OCI-LY7 (cell line): ENCODE measurements at regions of chr2 and their contacts with region 1.

Region 1: GRCh38 chr2:4164236-4164635 is 460.9 kb downstream of the DCDC2C start:
- DNase-seq: no peak
- H3K4me3 ChIP-seq: no peak overlapping the region
- H3K27ac ChIP-seq: no peak overlapping the region
- H3K4me1 ChIP-seq: no peaks in the 10 kb centered on the region
- CTCF ChIP-seq: no peak

Region 2: DNA sequence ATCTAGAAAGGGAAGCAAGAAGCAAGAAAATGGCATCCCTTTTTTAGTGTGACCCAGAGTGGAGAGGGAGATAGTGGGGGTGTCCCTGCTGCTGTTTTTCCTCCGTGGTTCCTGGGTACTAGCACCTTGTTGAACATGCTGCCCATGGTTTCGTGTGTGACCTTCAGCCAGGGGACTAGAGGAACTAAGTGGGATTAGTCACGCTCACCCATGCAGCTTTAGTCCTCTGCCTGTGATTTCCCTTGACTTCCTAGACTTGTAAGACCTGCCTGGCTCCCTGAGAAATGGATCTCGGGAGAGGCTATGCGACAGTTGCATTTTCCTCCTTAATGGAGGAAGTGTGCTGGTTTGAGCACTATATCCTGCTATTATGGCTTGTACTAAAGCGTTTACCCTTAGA is 10.6 kb after region 1 on chr2:
- CTCF ChIA-PET with region 1: no interaction called
- POLR2A ChIA-PET with region 1: no interaction called
- intact Hi-C with region 1: loop called (anchors 1 kb)
- DNase-seq: no peak
- H3K4me3 ChIP-seq: no peak overlapping the region
- H3K27ac ChIP-seq: no peak overlapping the region
- H3K4me1 ChIP-seq: no peaks in the 10 kb centered on the region
- CTCF ChIP-seq: no peak

Region 3: GRCh38 chr2:4246364-4247131 is 82.3 kb after region 1 on chr2:
- CTCF ChIA-PET with region 1: no interaction called
- POLR2A ChIA-PET with region 1: no interaction called
- intact Hi-C with region 1: no loop called
- DNase-seq: no peak
- H3K4me3 ChIP-seq: no peak overlapping the region
- H3K27ac ChIP-seq: no peak overlapping the region
- H3K4me1 ChIP-seq: no peaks in the 10 kb centered on the region
- CTCF ChIP-seq: no peak

Region 4: DNA sequence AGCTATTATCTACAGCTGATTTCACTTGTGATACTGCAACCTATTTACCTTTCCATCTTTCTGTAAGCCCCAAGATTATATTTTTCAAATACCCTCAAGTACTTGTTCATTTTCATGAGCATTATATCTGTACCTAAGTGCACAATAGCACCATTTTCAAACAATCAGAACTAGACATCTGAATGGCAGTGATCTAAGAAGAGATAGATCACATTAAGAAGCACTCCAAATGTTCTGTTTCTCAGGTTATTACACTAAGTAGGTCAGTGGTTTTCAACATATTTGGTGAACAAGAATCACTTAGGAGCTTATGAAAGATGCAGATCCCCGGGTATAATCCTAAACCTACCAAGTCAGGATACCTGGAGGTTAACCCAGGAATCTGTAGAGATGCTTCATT is 411.8 kb after region 1 on chr2:
- CTCF ChIA-PET with region 1: no interaction called
- POLR2A ChIA-PET with region 1: no interaction called
- intact Hi-C with region 1: no loop called
- DNase-seq: no peak
- H3K4me3 ChIP-seq: no peak overlapping the region
- H3K27ac ChIP-seq: no peak overlapping the region
- H3K4me1 ChIP-seq: no peaks in the 10 kb centered on the region
- CTCF ChIP-seq: no peak